Heart right ventricle (tissue), 16 donors: ENCODE measurements at regions of chr6 and their contacts with region 1.

Region 1: GRCh38 chr6:62465206-62465605 is 179.2 kb upstream of the KHDRBS2 start:
- DNase-seq: no peak
- ATAC-seq: no peak
- H3K4me3 ChIP-seq: no peak overlapping the region
- H3K27ac ChIP-seq: no peak overlapping the region
- H3K4me1 ChIP-seq: no peaks in the 10 kb centered on the region
- H3K27me3 ChIP-seq: no peaks in the 10 kb centered on the region
- CTCF ChIP-seq: no peak

Region 2: GRCh38 chr6:62262283-62262682 is 202.9 kb before region 1 on chr6:
- intact Hi-C with region 1: loop called in 1 of 10 experiments (anchors 5 kb)
- DNase-seq: no peak
- ATAC-seq: no peak
- H3K4me3 ChIP-seq: no peak overlapping the region
- H3K27ac ChIP-seq: no peak overlapping the region
- H3K4me1 ChIP-seq: no peaks in the 10 kb centered on the region
- H3K27me3 ChIP-seq: no peaks in the 10 kb centered on the region
- CTCF ChIP-seq: no peak

Region 3: GRCh38 chr6:62445521-62445920 is 19.7 kb before region 1 on chr6:
- intact Hi-C with region 1: no loop called
- DNase-seq: no peak
- ATAC-seq: no peak
- H3K4me3 ChIP-seq: no peak overlapping the region
- H3K27ac ChIP-seq: no peak overlapping the region
- H3K4me1 ChIP-seq: no peaks in the 10 kb centered on the region
- H3K27me3 ChIP-seq: no peaks in the 10 kb centered on the region
- CTCF ChIP-seq: no peak

Region 4: GRCh38 chr6:62978920-62979319 is 513.7 kb after region 1 on chr6:
- intact Hi-C with region 1: no loop called
- DNase-seq: no peak
- ATAC-seq: no peak
- H3K4me3 ChIP-seq: no peak overlapping the region
- H3K27ac ChIP-seq: no peak overlapping the region
- H3K4me1 ChIP-seq: no peaks in the 10 kb centered on the region
- H3K27me3 ChIP-seq: no peaks in the 10 kb centered on the region
- CTCF ChIP-seq: no peak